AG04449 (cell line): ENCODE measurements at regions of chr1 and their contacts with region 1.

Region 1: GRCh38 chr1:13662493-13662892 is 37.5 kb upstream of the PRDM2 start:
- DNase-seq: no peak
- H3K4me3 ChIP-seq: no peak overlapping the region
- CTCF ChIP-seq: no peak

Region 2: GRCh38 chr1:13451399-13451965 is 211.0 kb before region 1 on chr1:
- CTCF ChIA-PET with region 1: no interaction called
- POLR2A ChIA-PET with region 1: no interaction called
- DNase-seq: no peak
- H3K4me3 ChIP-seq: no peak overlapping the region
- CTCF ChIP-seq: no peak

Region 3: DNA sequence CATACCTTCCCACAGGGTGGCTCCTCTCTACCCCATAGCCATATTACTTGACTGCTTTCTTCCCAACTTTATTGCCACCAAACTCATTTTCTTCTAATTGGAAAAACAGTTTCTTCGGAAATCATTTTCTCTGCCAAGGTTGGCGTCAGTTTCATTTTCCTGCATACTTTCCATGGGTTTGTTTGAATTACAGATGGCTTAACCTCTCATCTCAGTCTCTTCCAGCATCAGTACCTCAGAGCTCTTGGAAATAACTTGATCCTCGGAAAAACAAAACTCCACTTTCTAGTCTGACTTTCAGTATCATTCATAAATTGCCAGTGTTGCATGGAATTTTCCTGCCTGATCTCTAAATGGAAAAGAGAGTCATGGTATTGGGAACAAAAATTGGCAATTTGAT is 17.2 kb after region 1 on chr1:
- CTCF ChIA-PET with region 1: interaction called, 21 read pairs
- POLR2A ChIA-PET with region 1: no interaction called
- DNase-seq: no peak
- H3K4me3 ChIP-seq: no peak overlapping the region
- CTCF ChIP-seq: no peak

Region 4: GRCh38 chr1:13813398-13814012 is 151.0 kb after region 1 on chr1:
- CTCF ChIA-PET with region 1: interaction called, 17 read pairs
- POLR2A ChIA-PET with region 1: no interaction called
- DNase-seq: no peak
- H3K4me3 ChIP-seq: no peak overlapping the region
- CTCF ChIP-seq: peak; percentile 85

Region 5: DNA sequence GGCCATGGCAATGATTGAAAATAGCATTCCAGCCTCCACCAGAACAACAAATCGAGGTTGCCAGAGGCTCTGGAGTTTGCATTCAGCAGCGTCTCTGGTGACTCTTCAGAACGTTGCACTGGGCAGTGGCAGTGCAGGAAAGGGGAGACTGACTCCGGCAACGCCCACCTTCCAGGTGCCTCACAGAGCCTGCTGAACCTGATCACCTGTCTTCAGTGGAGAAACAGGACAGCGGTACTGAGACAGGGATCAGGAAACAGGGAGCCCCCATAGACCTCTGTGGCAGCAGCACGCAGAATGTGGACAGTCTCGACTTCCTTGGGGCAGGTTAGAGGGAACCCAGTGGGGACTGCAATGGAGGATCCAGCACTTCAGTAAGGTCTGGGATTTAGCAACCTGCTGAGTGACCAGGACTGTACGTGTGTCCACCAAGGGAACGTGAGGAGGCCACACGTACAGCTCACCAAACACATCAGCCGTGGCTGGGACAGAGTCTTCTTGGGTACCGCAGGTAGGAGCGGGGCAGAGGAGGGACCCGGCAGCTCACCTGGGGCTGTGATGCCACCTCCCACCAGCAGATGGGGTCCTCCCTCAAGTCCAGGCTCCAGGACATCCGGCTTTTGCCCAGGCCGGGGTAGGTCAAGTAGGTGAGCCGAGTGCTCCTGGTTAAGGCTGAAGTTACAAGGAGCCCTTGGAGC is 166.1 kb after region 1 on chr1:
- CTCF ChIA-PET with region 1: interaction called, 31 read pairs
- POLR2A ChIA-PET with region 1: no interaction called
- DNase-seq: no peak
- H3K4me3 ChIP-seq: no peak overlapping the region
- CTCF ChIP-seq: peak; percentile 35

Region 6: DNA sequence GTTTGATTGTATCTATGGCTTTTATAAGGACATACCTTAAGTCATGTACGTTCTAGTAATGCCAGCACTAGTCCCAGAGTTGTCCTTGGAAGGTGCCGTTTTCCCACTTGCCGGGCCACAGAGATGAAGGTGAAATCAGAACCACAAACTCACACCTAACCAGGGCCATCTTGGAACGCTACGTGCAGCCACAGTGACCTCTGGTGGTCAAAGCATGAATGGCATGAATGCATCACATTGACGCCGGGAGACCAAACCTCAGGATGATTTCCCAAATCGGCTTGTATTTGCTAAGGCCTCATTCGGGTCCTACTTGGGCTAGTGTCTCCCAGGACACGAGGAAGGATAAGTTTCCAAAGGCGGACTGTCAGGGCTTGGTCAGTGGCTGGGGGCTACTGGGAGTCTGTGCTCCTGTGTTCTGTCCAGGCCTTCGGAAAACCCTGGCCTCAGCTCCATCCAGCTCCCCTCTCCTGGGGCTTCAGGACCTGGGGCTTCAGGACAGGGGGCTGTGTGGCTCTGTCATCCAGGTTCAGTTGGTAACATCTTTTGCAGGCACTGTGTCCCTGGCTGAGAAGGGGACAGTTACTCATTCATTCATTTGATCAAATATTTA is 298.0 kb after region 1 on chr1:
- CTCF ChIA-PET with region 1: interaction called, 10 read pairs
- POLR2A ChIA-PET with region 1: no interaction called
- DNase-seq: no peak
- H3K4me3 ChIP-seq: no peak overlapping the region
- CTCF ChIP-seq: peak; percentile 85